ENCODE measurements at regions of chr12 and their contacts with region 1.

Region 1: GRCh38 chr12:27293463-27293862 is 39.2 kb upstream of the BMAL2 start:
- DNase-seq: no peak

Region 2: DNA sequence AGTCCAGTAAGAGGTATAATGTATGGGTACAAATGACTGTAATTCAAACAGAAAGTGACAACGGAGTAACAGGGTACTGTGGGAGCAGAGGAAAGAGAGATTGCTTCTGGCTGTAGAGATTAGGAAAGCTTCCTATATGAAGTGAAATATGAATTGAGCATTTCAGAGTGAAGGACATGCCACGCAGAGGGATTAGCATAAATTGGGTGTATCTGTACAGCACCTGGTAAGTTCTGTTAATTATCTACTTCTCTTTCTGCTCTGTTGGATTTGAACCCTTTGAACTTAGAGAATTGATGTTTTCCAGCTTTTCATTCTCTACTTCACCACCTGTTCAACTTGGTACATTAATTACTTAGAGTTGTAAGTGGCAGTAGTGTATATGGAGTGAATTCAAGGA is 40.5 kb before region 1 on chr12:
- intact Hi-C with region 1: loop called in 1 of 2 experiments (anchors 5 kb)
- DNase-seq: no peak

Region 3: DNA sequence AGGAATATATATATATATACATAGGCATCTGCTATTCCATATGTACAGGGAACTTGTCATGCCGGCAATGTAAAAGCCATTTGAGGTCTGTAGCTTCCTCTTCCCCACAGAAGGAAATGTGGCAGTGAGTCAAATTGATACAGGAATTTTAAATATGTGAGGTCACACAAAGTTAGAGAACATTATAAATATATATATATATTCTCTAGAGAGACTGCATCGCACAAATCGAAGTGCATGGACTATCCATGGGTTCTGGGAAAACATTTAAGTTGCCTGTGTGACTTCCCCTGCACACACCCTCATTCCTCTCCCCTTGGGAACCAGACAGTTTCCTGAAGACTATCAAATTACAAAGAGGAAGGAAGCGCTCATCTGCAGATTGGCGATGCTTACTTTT is 795.9 kb after region 1 on chr12:
- intact Hi-C with region 1: no loop called
- DNase-seq: no peak

Measured in posterior vena cava (tissue), 2 donors.